Gastrocnemius medialis (tissue), 4 donors: ENCODE measurements at regions of chr20 and their contacts with region 1.

Region 1: GRCh38 chr20:47411161-47411560 is 54.7 kb upstream of the ZMYND8 start:
- DNase-seq: peak; percentile 75 to 79
- ATAC-seq: peak; percentile 92 to 96
- H3K4me3 ChIP-seq: peak overlapping the region; percentile 15 to 50 (median 44)
- H3K27ac ChIP-seq: peak overlapping the region; percentile 91 to 94 (median 91)
- H3K4me1 ChIP-seq: peaks cover 23 to 54% of the 10 kb centered on the region in 2 donors
- H3K27me3 ChIP-seq: no peaks in the 10 kb centered on the region
- CTCF ChIP-seq: no peak
- POLR2A ChIP-seq: peak; percentile 63 to 83

Region 2: DNA sequence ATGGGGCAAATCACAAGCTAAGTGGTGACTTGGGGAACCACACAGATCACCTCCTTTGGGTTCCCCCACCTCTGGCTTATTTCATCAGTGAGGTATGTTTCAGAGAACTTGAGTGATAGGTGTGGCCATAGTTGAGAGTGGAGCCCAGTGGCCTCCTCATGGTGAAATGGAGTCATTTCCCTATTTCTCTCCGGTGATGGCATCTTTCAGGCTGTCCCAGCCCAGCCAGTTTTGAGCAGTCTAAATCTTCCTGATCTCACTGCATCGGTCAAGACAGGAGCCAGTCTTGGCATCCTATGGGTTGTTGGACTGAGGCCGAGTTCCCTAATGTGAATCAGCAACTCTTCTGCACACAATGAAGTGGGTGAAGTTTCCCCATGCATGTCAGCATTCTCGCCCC is 384.1 kb before region 1 on chr20:
- in situ Hi-C with region 1: no loop called
- intact Hi-C with region 1: no loop called
- DNase-seq: no peak
- ATAC-seq: no peak
- H3K4me3 ChIP-seq: no peak overlapping the region
- H3K27ac ChIP-seq: no peak overlapping the region
- H3K4me1 ChIP-seq: no peaks in the 10 kb centered on the region
- H3K27me3 ChIP-seq: no peaks in the 10 kb centered on the region
- CTCF ChIP-seq: no peak
- POLR2A ChIP-seq: no peak

Region 3: DNA sequence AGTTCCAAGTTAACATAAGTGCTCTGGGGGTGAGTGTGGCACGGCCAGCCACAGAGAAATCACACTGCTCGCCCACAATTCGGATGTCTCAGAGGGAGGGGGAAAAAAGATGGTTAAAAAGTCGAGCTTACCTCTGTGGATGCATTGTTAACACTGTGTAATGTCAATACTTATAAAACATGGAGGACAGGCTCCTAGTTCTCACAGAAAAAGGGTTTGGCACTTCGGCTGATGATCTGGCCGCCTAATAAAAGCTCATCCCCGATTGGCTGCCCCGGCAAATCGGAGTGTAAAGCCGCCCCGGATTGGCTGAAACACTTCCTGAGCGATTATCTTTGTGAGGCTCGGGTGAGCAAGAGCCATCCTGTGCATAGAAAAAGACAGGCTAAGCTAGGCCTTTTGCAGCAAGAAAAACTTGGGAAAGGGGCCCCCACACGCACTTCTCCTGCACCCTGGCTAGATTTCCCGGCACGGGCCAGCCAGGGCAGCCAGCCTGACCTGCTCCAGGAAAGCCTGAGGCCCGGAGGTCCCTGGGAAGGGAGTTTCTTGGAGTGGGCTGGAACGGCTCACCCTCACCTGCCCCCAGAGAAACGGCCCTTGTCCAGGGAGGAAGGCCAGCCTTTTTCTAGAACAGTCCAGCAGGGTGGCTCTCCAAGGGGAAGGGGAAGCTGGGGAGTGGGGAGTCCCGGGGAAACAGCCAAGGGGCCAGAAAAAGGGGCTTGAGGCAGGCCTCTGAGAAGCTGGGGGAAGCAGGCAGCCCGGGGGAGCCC is 54.5 kb before region 1 on chr20 and contains the start of gene ZMYND8:
- in situ Hi-C with region 1: no loop called
- intact Hi-C with region 1: loop called (anchors 5 kb)
- DNase-seq: peak; percentile 86 to 96
- ATAC-seq: peak; percentile 41 to 46
- H3K4me3 ChIP-seq: peak within 1 kb of the TSS; percentile 28 to 52 (median 44)
- H3K27ac ChIP-seq: peak within 1 kb of the TSS; percentile 96 to 100 (median 97)
- H3K4me1 ChIP-seq: peaks cover 97 to 99% of the 10 kb centered on the region in 2 donors
- H3K27me3 ChIP-seq: no peaks in the 10 kb centered on the region
- CTCF ChIP-seq: no peak
- POLR2A ChIP-seq: peak; percentile 14 to 57
- total RNA-seq, gene ZMYND8: 15.1 to 32.2 (median 19.7) TPM

Region 4: GRCh38 chr20:47551841-47552240 is 140.7 kb after region 1 on chr20:
- in situ Hi-C with region 1: no loop called
- intact Hi-C with region 1: no loop called
- DNase-seq: no peak
- ATAC-seq: no peak
- H3K4me3 ChIP-seq: no peak overlapping the region
- H3K27ac ChIP-seq: no peak overlapping the region
- H3K4me1 ChIP-seq: peaks cover 10 to 13% of the 10 kb centered on the region in 2 donors
- H3K27me3 ChIP-seq: no peaks in the 10 kb centered on the region
- CTCF ChIP-seq: no peak
- POLR2A ChIP-seq: no peak

Region 5: DNA sequence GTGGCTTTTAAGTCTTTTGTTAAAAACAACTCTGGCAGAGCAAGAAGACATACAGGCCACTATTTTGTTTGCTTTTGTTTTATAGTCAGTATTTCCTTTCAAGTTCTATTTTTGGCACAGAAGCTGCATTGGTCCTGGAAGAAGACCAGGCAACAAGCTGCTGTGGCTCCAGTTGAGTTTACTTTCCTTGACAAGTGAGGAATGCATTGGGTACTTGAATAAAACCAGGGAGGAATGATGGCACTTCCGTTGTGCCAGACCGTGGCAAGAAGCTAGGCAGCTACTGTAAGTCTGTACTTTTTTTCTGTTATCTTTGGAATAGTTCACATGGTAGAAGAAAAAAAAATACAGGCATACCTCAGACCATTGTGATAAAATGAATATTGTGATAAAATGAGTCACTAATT is 156.8 kb after region 1 on chr20:
- in situ Hi-C with region 1: no loop called
- intact Hi-C with region 1: loop called (anchors 5 kb)
- DNase-seq: no peak
- ATAC-seq: peak in 1 of 2 donors; percentile 11
- H3K4me3 ChIP-seq: no peak overlapping the region
- H3K27ac ChIP-seq: peak overlapping the region; percentile 55 to 88 (median 83)
- H3K4me1 ChIP-seq: peaks cover 51 to 57% of the 10 kb centered on the region in 2 donors
- H3K27me3 ChIP-seq: no peaks in the 10 kb centered on the region
- CTCF ChIP-seq: no peak
- POLR2A ChIP-seq: no peak